Aorta (tissue), 5 donors: ENCODE measurements at regions of chr11 and their contacts with region 1.

Region 1: GRCh38 chr11:47213985-47214564 is 699 bp upstream of the DDB2 start:
- DNase-seq: peak; percentile 97 to 98
- ATAC-seq: peak; percentile 95
- H3K4me3 ChIP-seq: peak overlapping the region; percentile 25 to 58
- H3K27ac ChIP-seq: peak overlapping the region; percentile 31 to 84
- H3K4me1 ChIP-seq: no peaks in the 10 kb centered on the region
- H3K27me3 ChIP-seq: no peaks in the 10 kb centered on the region

Region 2: GRCh38 chr11:47111318-47111804 is 102.7 kb before region 1 on chr11:
- intact Hi-C with region 1: no loop called
- DNase-seq: no peak
- ATAC-seq: no peak
- H3K4me3 ChIP-seq: no peak overlapping the region
- H3K27ac ChIP-seq: no peak overlapping the region
- H3K4me1 ChIP-seq: no peaks in the 10 kb centered on the region
- H3K27me3 ChIP-seq: no peaks in the 10 kb centered on the region

Region 3: DNA sequence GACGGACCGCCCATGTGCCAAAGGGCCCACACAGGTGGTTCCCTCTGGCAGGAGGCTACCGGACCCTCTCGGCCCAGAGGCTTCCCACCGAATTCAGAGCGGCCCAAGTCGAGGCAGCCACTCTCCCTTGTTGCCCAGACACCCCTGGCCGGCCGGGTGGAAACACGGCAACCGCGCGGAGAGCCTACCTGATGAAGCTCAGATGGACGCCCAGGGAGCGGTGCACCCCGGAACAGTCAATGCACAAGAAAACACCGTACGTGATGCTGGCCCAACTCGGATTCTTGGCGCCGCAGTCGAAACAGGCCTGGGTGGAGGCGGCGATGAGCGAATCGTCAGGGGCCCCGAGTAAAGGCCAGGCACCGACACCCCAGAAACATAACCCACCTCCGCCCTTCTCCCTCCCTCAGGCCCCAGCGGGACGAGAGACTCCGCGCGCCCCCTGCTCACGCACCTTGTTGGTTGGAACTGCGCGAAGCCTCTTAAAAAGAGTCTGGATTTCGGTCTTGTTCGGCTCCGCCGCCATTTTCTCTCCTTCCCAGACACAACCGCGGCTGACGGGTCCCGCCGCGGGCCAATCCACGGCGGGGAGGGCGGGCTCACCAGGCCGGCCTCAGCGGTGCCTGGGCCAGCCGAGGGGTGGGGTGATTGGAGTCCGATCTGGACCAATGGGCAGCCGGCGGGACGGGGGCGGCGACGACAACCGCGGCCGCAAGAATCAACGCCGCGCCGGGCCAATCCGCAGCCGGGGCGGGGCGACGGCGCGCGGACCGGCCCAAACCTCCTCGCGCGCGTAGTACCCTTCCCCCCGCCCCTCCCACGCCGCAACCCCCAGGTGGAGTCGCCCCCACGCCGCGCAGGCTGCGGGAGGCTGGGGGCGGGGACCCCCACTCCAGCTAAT is 37.5 kb before region 1 on chr11 and contains the start of gene ARFGAP2:
- intact Hi-C with region 1: loop called (anchors 2 to 5 kb)
- DNase-seq: peak; percentile 98 to 99
- ATAC-seq: peak; percentile 96
- H3K4me3 ChIP-seq: peak within 1 kb of the TSS; percentile 77 to 78
- H3K27ac ChIP-seq: peak within 1 kb of the TSS; percentile 38 to 92
- H3K4me1 ChIP-seq: no peaks in the 10 kb centered on the region
- H3K27me3 ChIP-seq: no peaks in the 10 kb centered on the region
- total RNA-seq, gene ARFGAP2: 65.8 to 68.2 TPM

Region 4: GRCh38 chr11:47186076-47186936 is 27.8 kb before region 1 on chr11 and contains the start of gene PACSIN3:
- intact Hi-C with region 1: loop called (anchors 1 to 2 kb)
- DNase-seq: peak; percentile 67 to 84
- ATAC-seq: peak; percentile 66
- H3K4me3 ChIP-seq: peak within 1 kb of the TSS; percentile 72 to 79
- H3K27ac ChIP-seq: peak within 1 kb of the TSS; percentile 51 to 86
- H3K4me1 ChIP-seq: no peaks in the 10 kb centered on the region
- H3K27me3 ChIP-seq: no peaks in the 10 kb centered on the region
- total RNA-seq, gene PACSIN3: 24.6 to 36.2 TPM

Region 5: DNA sequence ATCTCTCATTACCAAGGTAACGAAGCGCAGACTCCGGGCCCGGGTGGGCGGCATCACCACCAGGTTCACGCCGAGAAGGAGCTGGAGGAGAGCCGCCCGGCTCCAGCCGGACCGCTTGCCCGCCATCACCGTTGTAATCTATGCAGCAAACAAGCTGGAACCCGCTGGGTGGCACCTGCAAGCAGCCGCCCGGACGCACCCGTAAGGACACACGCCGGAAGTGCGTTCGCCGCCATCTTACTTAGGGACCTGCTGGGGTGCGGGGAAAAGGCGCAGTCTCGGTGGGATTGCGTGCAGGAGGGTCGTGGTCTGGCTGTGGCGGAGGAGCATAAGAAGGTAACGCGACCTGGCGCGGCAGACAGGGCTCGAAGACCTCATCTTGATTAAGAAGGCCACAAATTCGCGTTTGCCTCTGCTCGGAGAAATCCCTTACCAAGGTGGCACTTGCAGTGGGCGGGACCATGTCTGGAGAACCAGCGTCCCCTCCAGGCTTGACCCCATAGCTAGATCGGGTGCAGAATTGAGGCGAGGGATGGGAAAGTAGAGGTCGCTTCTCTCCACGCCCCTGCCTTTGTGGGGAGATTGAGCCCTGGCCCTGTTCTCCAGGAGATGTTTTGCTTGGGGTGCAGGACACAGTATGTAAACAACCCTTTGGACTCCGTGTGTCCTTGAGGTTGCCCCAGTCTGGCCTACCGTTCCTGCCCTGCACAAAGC is 34.7 kb after region 1 on chr11 and contains the start of gene ACP2:
- intact Hi-C with region 1: loop called in 1 of 2 experiments (anchors 2 kb)
- DNase-seq: peak; percentile 93 to 95
- ATAC-seq: peak; percentile 95
- H3K4me3 ChIP-seq: peak within 1 kb of the TSS; percentile 51 to 73
- H3K27ac ChIP-seq: peak within 1 kb of the TSS in 1 of 2 donors; percentile 60
- H3K4me1 ChIP-seq: no peaks in the 10 kb centered on the region
- H3K27me3 ChIP-seq: no peaks in the 10 kb centered on the region
- total RNA-seq, gene ACP2: 20.6 to 27.8 TPM

Region 6: DNA sequence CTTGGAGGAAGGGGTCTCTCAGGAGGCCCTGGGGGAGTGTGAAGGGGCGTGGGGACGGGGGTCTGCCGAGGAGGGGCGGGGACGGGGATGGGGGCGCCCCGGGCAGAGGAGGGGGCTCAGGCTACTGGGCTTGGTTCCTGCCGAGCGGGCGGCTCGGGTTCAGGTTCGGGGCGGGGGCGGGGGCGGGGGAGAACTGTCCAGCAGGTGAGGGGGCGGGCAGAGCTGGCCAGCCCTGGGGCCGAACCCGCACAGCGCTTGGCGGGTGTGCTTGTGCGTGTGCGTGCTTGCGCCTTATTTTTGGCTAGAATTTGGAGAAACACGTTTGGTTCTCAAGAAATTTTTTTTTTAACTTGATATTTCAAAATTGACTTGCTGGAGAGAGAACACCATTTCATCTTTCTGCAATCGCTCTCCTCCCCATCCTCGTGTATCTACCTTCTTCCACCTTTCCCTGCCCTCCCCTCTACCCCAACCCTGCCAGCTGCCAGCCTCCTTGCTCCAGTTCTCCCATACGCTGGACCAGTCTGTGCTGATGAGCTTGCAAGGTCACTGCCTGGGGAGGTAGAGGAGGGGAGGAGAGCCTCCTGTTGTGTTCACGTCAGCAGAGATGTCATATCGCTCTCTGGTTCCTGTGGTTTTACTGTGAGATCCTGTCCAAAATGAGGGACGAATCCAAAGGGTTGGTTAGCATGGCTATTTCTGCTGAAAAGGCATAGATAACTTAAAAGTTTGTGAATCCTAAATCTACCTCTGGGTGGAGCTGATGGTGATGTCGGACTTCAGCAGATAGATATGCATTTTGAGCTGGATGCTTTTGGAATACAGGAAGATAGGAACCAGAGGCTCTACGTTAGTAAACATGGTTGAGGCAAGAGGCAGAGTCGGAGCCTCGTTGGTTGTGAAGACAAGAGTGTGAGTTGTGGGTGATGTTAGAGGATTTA is 56.5 kb after region 1 on chr11:
- intact Hi-C with region 1: no loop called
- DNase-seq: peak in 1 of 2 donors; percentile 69
- ATAC-seq: no peak
- H3K4me3 ChIP-seq: peak overlapping the region; percentile 72 to 93
- H3K27ac ChIP-seq: peak overlapping the region; percentile 16 to 52
- H3K4me1 ChIP-seq: no peaks in the 10 kb centered on the region
- H3K27me3 ChIP-seq: no peaks in the 10 kb centered on the region

Region 7: DNA sequence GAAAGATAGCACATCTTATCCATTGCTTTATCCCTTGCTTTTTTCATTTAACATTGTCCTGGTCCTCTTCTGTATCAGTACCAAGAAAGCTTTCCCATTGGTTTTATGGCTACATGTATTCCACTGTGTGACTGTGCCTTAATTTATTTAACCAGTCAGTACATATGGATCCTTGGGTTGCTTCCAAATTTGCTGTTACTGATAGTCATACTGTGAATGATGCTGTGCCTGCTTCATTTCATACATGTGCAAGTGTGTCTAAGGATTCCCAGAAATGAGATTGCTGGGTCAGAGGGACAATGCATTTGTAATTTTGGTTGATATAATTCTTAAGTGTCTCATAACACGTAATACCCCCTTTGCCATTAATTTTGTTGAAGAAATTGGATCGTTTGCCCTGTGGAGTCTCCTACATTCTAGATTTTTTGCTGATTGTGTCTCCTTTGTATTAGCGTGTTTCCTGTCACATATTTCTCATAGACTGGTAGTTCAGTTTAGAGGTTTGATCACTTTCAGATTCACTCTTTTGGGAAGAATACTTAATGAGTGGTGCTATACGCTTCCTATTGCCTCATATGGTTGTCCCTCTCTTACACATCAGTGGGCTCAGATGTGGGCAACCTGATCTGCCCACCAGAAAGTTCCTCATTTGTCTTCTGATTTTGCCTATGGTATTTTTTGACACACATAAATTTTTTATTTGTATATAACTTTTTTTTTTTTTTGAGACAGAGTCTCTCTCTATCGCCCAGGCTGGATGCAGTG is 103.2 kb after region 1 on chr11:
- intact Hi-C with region 1: no loop called
- DNase-seq: no peak
- ATAC-seq: no peak
- H3K4me3 ChIP-seq: no peak overlapping the region
- H3K27ac ChIP-seq: no peak overlapping the region
- H3K4me1 ChIP-seq: no peaks in the 10 kb centered on the region
- H3K27me3 ChIP-seq: no peaks in the 10 kb centered on the region